Uterus (tissue), 4 donors: ENCODE measurements at regions of chr11 and their contacts with region 1.

Region 1: DNA sequence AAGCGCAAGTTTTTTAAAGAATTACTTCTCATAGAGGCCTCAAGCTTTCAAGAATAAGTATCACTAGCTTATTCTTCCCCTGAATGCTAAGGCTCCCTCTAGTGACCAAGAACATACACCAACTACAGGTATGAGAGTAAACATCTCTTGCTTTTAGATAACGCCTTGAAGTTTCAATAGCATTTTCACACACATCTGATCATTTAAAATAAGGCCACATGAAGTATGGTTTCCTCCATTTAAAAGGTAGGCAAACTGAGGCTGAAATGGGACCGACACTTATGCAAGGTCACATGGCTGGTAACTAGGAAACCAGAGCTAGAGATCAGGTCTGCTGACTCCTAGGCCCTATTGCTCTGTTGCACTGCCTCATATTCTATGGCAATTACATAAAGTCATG is 66.5 kb downstream of the CCDC34 start:
- DNase-seq: no peak
- H3K4me3 ChIP-seq: no peak overlapping the region
- H3K27ac ChIP-seq: no peak overlapping the region
- H3K4me1 ChIP-seq: no peaks in the 10 kb centered on the region
- H3K27me3 ChIP-seq: no peaks in the 10 kb centered on the region
- CTCF ChIP-seq: peak; percentile 57 to 70 (median 63)
- POLR2A ChIP-seq: no peak

Region 2: DNA sequence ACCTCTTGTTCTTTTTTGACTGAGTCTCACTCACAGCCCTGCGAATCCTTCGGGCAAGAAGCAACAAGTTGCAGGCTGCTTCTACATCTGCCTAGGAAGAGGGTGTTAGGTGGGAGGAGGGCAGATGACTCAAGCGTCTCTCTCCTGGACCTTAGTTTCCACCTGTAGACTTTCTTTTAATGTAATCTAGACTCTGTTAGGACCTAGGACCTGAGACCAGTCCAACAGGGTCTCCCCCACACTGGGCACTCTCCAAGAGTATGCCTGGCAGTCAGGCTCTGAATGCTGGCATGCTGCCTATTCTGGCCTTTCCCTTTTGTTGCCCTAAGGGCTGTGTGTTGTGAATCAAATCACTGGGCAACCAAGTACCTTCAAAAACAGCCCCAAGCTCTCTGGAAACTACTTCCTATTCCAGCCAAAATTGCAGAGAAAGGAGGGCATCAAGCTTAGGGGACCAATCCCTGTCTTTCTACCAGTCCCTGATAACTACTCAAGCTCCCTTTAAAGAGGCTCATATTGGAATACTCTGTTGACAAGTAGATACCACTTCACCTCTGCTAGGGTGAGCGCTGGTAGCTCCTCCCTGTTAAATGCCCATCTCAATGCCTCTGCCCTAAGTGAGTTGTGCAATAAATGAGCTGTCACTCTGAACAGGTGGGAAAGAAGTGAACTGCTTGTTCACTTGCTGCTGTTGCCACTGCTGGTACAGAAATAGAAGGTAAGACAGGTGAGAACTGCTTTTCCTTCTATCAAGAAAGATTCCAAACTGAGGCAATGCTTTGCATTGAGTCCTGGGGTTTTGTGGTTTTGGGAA is 256.0 kb before region 1 on chr11 and contains the start of gene BBOX1:
- intact Hi-C with region 1: no loop called
- DNase-seq: peak in 1 of 2 donors; percentile 35
- H3K4me3 ChIP-seq: no peak within 1 kb of the TSS
- H3K27ac ChIP-seq: no peak within 1 kb of the TSS
- H3K4me1 ChIP-seq: no peaks in the 10 kb centered on the region
- H3K27me3 ChIP-seq: no peaks in the 10 kb centered on the region
- CTCF ChIP-seq: no peak
- POLR2A ChIP-seq: no peak
- total RNA-seq, gene BBOX1: 0.55 TPM in 1 of 4 donors, not detected in the others

Region 3: DNA sequence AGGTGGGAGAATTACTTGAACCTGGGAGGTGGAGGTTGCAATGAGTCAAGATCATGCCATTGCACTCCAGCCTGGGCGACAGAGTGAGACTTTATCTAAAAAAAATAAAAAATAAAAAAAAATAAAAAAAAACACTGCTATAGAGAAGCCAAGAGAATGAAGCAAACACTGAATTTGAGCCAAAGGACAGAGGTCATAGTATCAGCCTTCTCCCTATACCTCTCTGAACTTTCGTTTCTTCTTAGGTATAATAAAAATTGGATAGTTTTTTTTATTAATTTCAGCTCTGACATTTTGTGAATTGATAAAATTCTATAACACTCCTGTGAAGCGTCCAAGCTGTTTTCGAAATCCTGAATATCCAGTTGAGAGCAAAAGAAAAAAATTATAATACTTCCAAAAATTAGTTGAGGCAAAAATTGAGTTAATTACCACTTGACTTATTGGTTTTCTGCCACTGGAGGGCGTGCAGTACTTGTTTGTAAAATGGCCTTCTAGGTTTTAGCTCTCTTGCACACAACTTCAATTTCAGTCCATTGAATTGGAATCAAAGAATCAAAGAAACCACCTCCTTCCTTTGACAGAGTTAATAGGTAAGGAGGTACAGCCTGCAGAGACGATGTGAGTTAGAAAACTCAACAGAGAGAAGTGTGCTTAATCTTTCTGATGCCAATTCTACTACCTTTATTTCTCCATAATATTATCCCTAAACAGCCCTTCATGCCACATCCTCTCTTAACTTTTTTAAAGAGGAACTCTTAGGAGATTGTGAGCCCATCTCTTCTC is 112.6 kb before region 1 on chr11:
- intact Hi-C with region 1: loop called (anchors 10 kb)
- DNase-seq: peak; percentile 37 to 70
- H3K4me3 ChIP-seq: no peak overlapping the region
- H3K27ac ChIP-seq: no peak overlapping the region
- H3K4me1 ChIP-seq: no peaks in the 10 kb centered on the region
- H3K27me3 ChIP-seq: no peaks in the 10 kb centered on the region
- CTCF ChIP-seq: peak; percentile 77 to 82 (median 79)
- POLR2A ChIP-seq: no peak